Cardiac septum (tissue), 1 donor: ENCODE measurements at regions of chr5 and their contacts with region 1.

Region 1: DNA sequence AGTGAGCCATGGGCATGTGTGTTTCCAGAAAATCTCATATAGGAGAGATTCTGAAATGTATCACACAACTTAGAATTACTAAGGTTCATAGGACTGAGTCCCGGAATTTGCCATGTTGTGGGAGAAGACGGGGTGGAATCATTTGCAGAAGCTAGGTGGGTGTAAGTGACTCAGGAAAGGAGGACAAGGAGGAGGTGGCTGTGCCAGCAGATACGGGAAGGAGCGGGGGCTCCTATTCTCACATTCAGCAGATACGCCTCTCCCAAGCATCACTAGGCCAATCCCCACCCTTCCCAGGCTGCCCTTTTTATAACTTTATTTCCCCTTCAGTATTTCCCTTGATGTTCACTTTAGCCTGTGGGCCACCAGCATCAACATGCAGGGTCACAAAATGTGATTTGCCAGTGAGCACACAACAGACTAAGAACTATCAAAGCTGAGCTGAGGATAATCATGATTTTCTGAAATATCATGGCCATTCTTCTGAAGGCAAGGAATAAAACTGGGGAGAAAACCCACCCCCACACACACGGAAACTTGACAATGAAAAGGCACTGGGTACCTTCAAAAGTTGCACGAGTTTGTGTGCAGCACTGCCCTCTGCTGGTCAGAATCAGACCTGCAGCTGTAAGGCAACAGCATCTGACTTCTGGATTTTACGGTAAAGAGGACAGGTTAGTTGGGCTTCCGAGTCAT is 133.2 kb downstream of the MTX3 start:
- DNase-seq: peak; percentile 79

Region 2: DNA sequence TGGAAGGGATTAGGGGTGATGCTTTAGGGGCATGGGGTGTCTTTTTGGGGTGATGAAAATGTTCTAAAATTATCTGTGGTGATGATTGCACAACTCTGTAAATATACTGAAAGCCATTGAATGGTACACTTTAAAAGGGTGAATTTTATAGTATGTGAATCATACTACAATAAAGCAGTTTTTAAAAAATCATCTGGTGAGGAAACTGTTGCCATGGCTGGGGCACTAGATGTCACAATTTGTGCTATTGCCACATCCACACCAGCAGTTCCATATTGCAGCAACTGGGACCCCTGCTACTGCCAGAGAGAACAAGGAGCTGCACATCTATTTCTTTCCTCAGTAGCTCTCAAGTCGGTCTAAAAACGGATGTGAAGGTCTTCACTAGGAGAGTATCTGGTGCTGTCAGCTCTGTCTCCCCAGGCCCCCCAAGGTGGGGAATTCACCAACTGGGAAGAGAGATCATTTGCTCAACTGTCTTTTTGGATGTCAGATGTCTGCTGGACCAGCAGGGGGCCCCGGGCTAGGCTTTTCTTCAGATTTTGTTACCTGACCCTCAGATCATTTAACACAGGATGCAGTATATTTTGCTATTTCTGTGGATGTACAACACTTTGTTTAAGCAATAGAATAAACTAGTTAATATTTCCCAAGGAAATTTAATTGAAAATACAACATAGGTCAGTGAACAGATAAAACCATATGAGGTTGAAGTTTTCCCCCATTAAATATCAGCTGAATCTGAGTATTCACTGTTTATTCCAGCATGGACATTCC is 155.1 kb before region 1 on chr5:
- intact Hi-C with region 1: loop called (anchors 10 kb)
- DNase-seq: no peak

Region 3: GRCh38 chr5:79898611-79899010 is 40.7 kb after region 1 on chr5:
- intact Hi-C with region 1: no loop called
- DNase-seq: no peak

Region 4: DNA sequence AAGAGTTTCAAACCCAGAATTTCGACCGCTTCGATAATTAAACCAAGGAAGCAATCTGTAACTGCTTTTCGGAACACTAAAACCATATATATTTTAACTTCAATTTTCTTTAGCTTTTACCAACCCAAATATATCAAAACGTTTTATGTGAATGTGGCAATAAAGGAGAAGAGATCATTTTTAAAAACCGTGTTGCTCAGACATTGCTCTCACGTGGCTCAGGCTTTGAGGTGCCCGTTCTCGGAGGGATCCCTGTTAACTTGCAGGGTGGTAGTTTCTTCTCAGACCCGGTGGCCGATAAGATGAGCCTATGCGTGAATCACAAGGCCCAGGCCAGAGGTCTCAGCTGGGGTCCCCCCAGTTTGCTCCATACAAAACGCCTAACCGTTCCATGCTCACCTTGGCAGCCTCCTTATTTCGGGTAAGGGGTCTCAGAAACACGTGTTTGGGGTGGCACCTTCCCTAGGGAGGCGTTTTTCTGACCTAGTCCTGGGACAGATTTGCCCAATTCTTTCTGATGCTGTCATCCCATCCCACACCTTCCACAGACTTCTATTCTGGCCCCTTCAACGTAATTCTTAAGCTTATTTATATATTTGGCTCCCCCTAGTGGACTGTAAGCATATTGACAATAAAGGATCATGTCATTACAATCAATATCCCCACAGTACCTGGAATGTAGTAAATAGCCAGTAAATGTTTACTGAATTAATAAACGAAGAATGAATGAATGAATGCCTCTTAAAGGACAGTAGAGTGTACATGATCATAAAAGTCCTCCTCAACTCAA is 225.4 kb after region 1 on chr5:
- intact Hi-C with region 1: loop called (anchors 5 kb)
- DNase-seq: peak; percentile 63